AG04449 (cell line): ENCODE measurements at regions of chr7 and their contacts with region 1.

Region 1: DNA sequence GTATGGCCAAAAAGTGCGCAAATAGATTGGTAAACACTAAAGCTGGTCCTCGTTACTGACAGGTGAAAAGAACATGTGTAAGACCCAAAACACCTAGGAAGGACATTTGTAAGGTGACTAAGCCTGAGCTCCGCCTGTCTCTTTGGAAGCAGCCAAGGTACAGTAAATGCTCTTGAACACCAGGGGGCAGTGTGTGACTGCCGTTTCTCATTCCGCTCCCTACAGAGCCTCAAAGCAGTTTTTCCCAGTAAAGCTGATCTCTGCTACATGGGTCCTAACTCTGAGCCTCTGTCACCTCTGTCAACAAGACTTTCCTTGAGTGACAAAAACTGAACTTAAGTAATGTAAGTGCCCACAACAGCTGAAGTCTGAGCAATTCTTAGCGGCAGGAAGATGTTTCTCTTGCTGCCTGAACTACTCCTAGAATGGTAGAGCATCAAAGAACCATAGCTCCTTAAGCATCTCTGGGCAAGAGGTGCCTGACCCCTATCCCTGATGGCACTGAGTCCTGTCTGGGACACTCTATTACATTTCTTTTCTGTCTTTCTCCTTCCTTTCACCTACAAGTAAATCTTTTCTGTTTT is 238.0 kb upstream of the INHBA start:
- DNase-seq: no peak
- H3K4me3 ChIP-seq: no peak overlapping the region
- CTCF ChIP-seq: peak; percentile 83

Region 2: DNA sequence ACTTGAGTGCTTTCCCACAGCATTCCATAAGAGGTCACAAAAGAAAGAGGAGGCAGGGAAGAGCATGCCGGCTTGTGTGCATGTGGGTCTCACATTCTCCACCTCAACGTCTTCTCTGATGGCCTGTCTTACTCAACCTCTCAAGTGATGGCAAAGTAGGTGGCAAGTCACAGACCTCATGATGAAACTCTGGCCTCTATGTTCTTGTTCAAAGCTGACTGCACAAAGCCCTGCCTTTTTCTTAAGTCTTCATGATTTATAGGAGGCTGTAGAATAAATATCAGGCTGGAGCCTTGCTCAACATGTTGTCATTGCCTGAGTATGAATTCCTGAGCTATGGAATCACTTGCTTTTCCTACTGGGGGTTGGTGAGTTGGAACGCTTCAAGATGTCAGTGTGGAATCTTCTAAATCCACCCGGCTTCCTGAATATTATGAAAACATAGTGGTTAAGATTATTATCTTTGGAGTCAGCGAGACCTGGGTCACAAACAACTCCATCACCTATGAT is 24.3 kb before region 1 on chr7:
- CTCF ChIA-PET with region 1: interaction called, 15 read pairs
- POLR2A ChIA-PET with region 1: no interaction called
- DNase-seq: peak; percentile 99
- H3K4me3 ChIP-seq: no peak overlapping the region
- CTCF ChIP-seq: no peak

Region 3: DNA sequence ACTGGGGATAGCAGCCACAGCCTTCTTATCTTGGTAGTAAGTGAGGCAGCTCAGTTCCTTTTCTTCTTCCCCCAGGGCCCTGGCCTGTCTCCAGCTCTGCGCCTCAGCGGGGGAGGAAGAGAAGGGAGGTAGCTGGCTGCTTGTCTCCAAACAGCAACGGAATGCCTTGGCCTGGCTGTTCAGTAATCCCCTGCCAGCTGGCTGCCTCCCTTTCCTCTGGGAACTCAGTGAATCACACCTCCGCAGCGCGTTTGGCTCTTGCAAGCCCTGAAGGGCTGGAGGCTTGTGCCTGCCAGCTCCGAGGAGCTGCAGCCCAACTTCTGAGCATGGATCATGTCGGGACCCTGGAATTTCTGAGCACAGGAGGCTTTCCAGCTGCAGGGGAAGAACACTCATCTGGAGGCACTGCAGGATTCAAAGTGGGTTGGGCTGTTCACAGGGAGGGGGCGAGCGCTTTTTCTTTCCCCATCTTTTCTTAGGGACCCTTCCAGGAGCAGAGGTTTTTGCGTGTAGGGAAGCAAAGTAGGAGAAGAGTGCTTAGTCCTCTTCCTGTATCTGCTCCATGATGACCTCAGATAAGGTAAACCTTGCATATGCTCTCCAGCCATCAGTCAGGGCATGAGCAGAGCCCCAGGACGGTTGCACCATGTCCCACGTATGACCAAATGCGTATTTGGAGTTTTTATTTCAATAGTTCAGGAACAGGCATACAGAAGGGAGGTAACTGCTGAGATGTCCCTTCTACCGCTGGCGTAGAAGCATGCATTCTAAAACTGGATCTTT is 15.2 kb after region 1 on chr7:
- CTCF ChIA-PET with region 1: interaction called, 104 read pairs
- POLR2A ChIA-PET with region 1: interaction called, 3 read pairs
- DNase-seq: peak; percentile 98
- H3K4me3 ChIP-seq: peak overlapping the region; percentile 36
- CTCF ChIP-seq: no peak

Region 4: GRCh38 chr7:42574685-42575084 is 633.8 kb after region 1 on chr7:
- CTCF ChIA-PET with region 1: interaction called, 12 read pairs
- POLR2A ChIA-PET with region 1: no interaction called
- DNase-seq: no peak
- H3K4me3 ChIP-seq: no peak overlapping the region
- CTCF ChIP-seq: peak; percentile 28

Region 5: GRCh38 chr7:42843205-42843800 is 902.5 kb after region 1 on chr7:
- CTCF ChIA-PET with region 1: interaction called, 113 read pairs
- POLR2A ChIA-PET with region 1: interaction called, 5 read pairs
- DNase-seq: no peak
- H3K4me3 ChIP-seq: no peak overlapping the region
- CTCF ChIP-seq: peak; percentile 56